ENCODE measurements at regions of chr20 and their contacts with region 1.

Region 1: DNA sequence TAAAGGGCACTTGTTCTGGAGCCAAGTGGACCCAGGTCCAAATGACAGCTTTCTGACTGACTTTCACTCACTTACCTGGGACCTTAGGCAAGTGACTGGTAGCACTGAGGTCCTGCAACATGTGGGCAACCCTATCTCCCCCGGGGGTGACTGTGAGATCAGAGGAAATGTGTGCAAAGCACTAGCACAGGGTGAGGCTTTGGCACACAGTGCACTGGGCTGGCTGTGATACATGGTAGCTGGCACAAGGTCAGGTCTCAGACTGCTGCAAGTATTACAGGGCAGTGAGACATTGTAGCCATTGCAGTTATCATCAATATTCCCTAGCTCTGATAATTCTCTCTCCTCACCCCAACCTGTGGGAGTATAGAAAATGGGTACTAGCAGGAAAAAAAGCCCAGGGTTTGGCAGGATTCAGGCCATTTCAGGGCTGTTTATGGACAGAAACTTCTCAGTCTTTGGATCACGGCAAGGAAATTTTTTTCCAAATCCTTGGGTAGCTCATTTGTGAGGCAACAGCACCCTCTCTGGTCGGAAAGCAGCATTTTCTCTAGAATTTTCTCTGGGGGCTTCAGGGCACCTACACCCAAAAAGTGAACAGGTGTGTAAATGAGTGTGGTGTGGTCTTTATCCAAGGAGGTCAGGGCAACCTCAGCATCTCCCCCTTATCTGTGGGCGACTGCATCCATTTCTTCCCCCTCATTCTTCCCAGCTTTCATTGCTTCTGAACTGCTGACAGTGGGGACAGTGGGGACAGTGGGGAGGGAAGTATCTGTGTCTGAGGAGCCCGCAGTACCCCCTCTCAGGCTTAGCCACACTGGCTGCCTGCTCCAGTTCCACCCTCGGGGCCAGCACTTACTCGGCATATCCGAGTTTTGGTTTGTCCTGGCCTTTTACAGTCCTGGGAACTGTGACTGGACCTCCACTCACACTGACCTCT is 148.7 kb upstream of the PHACTR3 start:
- DNase-seq: peak; percentile 3
- ATAC-seq: peak; percentile 78
- H3K4me3 ChIP-seq: no peak overlapping the region
- H3K27ac ChIP-seq: no peak overlapping the region
- H3K4me1 ChIP-seq: 0 out of 4 replicates have a peak, but pooled peaks cover 0 to 4% of the 10 kb centered on the region in 2 experiments
- H3K27me3 ChIP-seq: peaks cover 11% of the 10 kb centered on the region; the same call in 1 of the 2 replicates
- CTCF ChIP-seq: peak; percentile 47 to 70 (median 60); a peak in 5 of 6 replicates
- POLR2A ChIP-seq: no peak
- RAD21 ChIP-seq: peak; percentile 70

Region 2: DNA sequence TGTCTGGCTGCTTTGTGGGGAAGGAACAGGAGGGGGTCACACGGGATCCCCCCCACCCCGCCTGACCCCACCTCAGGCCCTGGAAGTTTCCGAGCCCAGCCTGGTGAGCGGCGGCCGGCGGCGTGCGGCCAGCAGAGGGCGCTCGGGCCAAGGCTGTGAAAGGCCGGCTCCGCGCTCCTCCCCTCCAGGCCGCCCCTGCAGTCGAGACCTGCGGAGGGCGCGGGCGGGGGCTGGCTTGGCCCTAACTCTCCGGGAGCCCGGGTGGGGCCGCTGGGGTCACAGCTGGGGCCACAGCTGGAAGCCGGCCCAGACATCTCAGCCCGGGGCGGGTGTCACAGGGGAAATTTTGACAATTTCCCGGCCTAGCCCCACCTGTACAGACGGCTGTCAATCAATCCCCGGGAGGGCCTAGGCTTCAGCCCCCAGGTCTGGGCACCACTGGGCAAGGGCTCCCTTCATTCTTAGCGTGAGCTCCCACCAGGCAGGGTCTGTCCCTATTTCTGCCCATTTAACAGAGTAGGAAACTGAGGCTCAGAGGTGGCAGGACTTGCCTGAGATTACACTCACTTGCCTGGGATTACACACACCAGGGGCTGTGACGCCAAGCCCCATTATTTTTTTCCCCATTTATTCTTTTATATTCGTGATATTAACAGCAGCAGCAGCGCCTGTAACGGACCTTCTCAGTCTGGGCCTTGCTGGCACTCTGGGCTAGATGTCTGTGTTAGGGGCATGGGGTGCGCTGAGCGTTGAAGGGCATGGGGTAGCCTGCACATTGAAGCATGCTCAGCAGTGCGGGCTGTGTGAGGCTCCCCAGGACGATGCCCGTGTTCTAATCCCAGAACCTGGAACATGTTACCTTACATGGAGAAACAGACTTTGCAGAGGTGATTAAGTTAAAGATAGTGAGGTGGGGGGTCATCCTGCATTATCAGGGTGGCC is 1858.4 kb before region 1 on chr20:
- CTCF ChIA-PET with region 1: no interaction called
- POLR2A ChIA-PET with region 1: no interaction called
- RAD21 ChIA-PET with region 1: no interaction called
- intact Hi-C with region 1: loop called (anchors 10 kb)
- DNase-seq: peak; percentile 8
- ATAC-seq: peak; percentile 91
- H3K4me3 ChIP-seq: no peak overlapping the region
- H3K27ac ChIP-seq: no peak overlapping the region
- H3K4me1 ChIP-seq: peaks cover 0 to 7% of the 10 kb centered on the region in 2 experiments; a peak in 1 of 4 replicates
- H3K27me3 ChIP-seq: no peaks in the 10 kb centered on the region
- CTCF ChIP-seq: peak; percentile 84 to 94 (median 91)
- POLR2A ChIP-seq: no peak
- RAD21 ChIP-seq: peak; percentile 91

Region 3: DNA sequence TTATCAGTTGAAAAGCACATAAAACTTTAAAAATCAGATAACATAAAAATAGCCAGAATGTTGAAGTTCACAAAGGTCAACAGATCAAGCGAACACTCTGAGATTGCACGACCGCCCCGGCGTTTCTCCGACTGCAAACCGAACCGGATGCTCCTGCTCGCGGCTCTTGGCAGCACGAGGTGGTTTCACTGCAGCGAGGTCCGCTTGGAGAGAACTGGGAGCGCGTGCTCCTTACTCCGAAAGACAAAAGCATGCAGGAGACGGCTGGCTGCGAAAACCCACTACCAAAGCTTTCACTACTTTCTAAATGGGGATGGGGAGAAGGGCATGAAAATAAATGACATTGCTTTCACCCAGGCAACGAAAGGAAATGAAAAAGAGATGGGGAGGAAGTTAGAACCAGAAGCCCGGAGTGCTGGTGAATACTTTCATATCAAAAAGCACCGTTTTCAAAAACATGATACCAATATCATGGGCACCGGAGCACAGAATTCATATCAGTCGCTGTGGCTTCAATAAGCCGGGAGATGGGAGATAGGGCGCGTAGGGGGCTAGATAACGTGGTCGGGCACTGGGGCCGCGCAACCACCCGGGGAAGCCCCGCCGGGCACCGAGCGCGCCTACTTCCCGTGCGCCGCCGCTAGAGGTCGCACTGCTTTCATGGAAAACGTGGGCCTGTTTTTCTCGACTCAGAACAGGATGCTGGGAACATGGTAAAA is 1218.9 kb before region 1 on chr20:
- CTCF ChIA-PET with region 1: interaction called, 4 read pairs
- POLR2A ChIA-PET with region 1: no interaction called
- RAD21 ChIA-PET with region 1: no interaction called
- intact Hi-C with region 1: loop called (anchors 10 kb)
- DNase-seq: no peak
- ATAC-seq: peak; percentile 97
- H3K4me3 ChIP-seq: no peak overlapping the region; a peak in 1 of 4 replicates
- H3K27ac ChIP-seq: no peak overlapping the region
- H3K4me1 ChIP-seq: no peaks in the 10 kb centered on the region
- H3K27me3 ChIP-seq: no peaks in the 10 kb centered on the region
- CTCF ChIP-seq: peak; percentile 67 to 95 (median 94)
- POLR2A ChIP-seq: no peak
- RAD21 ChIP-seq: peak; percentile 86

Region 4: DNA sequence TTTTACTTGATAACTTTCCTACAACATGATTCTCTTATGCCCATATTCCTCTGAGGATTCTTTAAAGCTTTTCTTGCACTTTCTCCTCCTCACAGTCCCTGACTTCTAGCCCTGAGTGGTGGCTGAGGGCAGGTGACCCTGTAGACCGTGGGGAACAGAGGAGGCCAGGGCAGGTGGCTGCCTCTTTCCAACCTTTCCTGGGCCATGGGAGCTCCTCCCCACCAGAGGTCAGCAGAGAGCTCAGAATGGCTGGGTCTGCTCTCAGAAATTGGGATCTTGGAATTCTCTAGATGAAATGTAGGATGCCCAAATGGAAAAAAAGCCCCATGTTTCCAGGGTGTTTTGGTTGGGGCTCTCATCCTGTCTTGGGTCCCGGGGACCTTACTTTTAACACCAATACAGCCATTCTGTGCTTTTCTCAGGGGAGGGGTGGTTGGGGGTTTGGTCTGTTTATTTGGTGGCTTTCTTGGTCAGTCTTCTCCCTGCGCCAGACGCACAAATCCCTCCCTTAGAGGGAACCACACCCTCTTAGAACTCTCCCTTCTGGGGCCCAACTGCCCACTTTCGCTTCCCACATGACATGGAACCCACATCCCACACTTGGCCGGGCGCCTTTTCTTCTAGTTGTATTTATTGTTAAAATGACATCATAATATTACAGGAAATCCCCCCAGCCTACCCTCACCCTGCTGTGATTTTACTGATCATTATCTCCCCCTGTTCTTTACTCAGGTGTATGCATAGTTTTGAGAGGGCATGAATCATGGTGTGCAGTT is 585.2 kb before region 1 on chr20:
- CTCF ChIA-PET with region 1: interaction called, 20 read pairs
- POLR2A ChIA-PET with region 1: no interaction called
- RAD21 ChIA-PET with region 1: no interaction called
- intact Hi-C with region 1: loop called (anchors 1 kb)
- DNase-seq: no peak
- ATAC-seq: peak; percentile 99
- H3K4me3 ChIP-seq: no peak overlapping the region
- H3K27ac ChIP-seq: no peak overlapping the region
- H3K4me1 ChIP-seq: no peaks in the 10 kb centered on the region
- H3K27me3 ChIP-seq: no peaks in the 10 kb centered on the region
- CTCF ChIP-seq: peak; percentile 73 to 97 (median 87)
- POLR2A ChIP-seq: no peak
- RAD21 ChIP-seq: peak; percentile 83

Region 5: DNA sequence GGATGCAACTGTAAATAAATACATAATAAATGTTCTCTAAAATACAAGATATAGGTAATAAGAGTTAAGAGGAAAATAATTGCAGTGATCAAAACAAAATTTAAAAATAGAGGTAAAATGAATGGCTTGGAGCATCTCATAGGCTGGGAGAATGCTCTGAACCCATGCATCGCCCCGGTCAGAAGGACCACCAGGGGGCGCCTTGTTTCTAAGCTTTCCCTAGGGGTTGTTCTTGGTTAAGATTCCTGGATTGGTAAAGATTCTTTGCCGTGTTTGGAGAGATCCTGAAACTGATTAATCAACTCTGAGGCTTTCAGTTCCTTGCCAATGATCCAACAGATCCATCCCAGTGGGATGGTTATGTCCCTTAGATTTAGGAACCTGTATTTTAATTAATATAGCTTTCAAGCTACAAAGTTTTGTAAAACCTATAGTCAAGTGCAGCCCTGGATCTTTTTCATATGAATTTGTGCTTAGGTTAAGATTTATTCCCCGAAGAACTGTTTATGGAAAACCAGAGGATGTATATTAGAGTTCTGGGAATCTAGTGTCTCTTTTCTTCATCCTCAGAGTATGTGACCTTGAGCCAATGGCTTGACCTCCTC is 367.7 kb before region 1 on chr20:
- CTCF ChIA-PET with region 1: interaction called, 27 read pairs
- POLR2A ChIA-PET with region 1: no interaction called
- RAD21 ChIA-PET with region 1: no interaction called
- intact Hi-C with region 1: loop called (anchors 5 kb)
- DNase-seq: peak; percentile 52
- ATAC-seq: peak; percentile 99
- H3K4me3 ChIP-seq: no peak overlapping the region
- H3K27ac ChIP-seq: no peak overlapping the region
- H3K4me1 ChIP-seq: peaks cover 0 to 3% of the 10 kb centered on the region in 2 experiments; a peak in 2 of 4 replicates
- H3K27me3 ChIP-seq: peaks cover 35% of the 10 kb centered on the region
- CTCF ChIP-seq: peak; percentile 73 to 91 (median 86); a peak in 5 of 6 replicates
- POLR2A ChIP-seq: no peak
- RAD21 ChIP-seq: peak; percentile 65

Region 6: DNA sequence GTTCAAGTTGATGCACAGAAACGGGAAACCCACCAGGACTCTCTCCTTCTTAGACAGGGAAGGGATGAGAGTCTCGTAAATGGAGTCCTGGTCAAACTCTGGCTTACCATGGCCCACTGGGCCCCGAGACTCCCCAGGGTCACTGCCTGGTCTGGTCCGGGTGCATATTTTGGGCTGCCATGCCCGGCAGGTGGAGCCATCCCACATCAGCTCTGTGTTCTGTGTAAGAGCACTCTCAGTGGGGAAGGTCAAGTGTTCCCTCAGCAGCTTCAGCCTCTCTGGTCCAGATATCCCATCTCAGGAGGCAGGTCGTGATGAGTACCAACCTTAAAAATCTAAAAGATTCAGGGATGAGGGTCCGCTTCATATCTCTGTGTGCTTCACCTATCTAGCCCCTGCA is 16.4 kb before region 1 on chr20:
- CTCF ChIA-PET with region 1: interaction called, 10 read pairs
- POLR2A ChIA-PET with region 1: no interaction called
- RAD21 ChIA-PET with region 1: no interaction called
- intact Hi-C with region 1: no loop called
- DNase-seq: no peak
- ATAC-seq: no peak
- H3K4me3 ChIP-seq: no peak overlapping the region
- H3K27ac ChIP-seq: no peak overlapping the region
- H3K4me1 ChIP-seq: no peaks in the 10 kb centered on the region
- H3K27me3 ChIP-seq: peaks cover 38% of the 10 kb centered on the region
- CTCF ChIP-seq: no peak
- POLR2A ChIP-seq: no peak
- RAD21 ChIP-seq: no peak

Measured in HCT116 (cell line).